ENCODE measurements at regions of chr15 and their contacts with region 1.

Region 1: GRCh38 chr15:24865303-24865702 is 89.5 kb upstream of the SNRPN start:
- DNase-seq: no peak
- H3K4me3 ChIP-seq: no peak overlapping the region
- H3K27ac ChIP-seq: no peak overlapping the region
- H3K4me1 ChIP-seq: no peaks in the 10 kb centered on the region
- H3K27me3 ChIP-seq: no peaks in the 10 kb centered on the region
- CTCF ChIP-seq: no peak

Region 2: DNA sequence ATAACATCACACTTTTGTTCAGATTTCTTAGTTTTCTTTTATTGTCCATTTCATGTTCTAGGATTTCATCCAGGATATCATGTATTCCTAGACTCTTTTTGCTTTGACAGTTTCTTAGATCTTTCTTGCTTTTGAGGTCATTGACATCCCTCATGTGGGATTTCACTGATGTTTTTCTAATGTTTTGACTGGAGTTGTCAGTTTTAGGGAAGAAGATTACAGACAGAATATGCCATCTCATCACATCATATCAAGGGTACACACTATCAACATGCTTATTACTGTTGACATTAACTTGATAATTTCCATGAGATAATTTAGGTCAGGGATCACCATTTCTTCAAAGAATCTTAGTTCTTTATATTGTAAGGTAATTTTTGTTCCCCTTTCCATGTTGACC is 88.0 kb before region 1 on chr15:
- intact Hi-C with region 1: loop called (anchors 5 kb)
- DNase-seq: no peak
- H3K4me3 ChIP-seq: no peak overlapping the region
- H3K27ac ChIP-seq: no peak overlapping the region
- H3K4me1 ChIP-seq: no peaks in the 10 kb centered on the region
- H3K27me3 ChIP-seq: no peaks in the 10 kb centered on the region
- CTCF ChIP-seq: no peak

Region 3: DNA sequence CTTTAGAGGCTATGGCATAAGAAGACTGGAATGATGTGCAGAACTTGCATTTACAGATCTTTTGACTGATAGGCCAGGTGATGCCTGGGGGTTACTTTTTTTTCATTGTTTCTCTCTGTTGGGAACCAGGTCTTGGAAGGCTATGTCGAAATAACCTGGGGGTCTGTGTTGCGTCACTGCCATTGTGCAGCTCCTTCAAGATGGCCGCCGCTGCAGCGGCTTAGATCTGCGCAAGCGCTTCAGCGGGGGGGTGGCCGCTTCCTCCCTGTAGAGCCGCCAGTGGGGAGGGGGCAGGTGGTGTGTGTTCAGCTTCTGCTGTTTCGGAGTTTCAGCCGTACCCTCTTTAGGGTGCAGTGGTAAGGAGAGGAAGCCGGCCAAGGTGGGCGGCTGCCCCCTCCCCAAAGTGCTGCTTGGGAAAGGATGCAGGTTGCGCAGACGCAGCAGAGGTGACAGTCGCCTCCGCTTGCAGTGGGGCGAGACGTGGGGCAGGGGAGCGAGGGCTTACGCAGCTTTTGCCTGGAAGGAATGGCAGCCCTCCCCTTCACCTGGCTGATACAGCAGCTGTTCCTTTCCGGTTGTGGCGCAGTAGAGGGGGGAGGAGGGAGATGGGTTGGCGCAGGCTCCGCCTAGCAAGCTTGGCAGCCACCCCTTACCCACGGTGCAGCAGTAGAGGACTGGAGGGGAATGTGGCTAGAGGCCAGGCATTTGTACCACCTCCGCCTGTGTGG is 91.0 kb after region 1 on chr15:
- intact Hi-C with region 1: no loop called
- DNase-seq: peak; percentile 87 to 92 (median 90)
- H3K4me3 ChIP-seq: peak overlapping the region; percentile 85 to 98 (median 96)
- H3K27ac ChIP-seq: peak overlapping the region; percentile 82 to 93
- H3K4me1 ChIP-seq: no peaks in the 10 kb centered on the region
- H3K27me3 ChIP-seq: no peaks in the 10 kb centered on the region
- CTCF ChIP-seq: no peak

Measured in kidney (tissue), 22 donors.